ENCODE measurements at regions of chr2 and their contacts with region 1.

Region 1: GRCh38 chr2:74587664-74588277 is 33.3 kb downstream of the DOK1 start:
- DNase-seq: peak; percentile 59
- H3K4me3 Mint-ChIP-seq: no peak overlapping the region
- H3K27ac Mint-ChIP-seq: no peak overlapping the region
- H3K4me1 Mint-ChIP-seq: peaks cover 7% of the 10 kb centered on the region
- H3K27me3 Mint-ChIP-seq: peaks cover 21% of the 10 kb centered on the region
- CTCF ChIP-seq: peak; percentile 27

Region 2: DNA sequence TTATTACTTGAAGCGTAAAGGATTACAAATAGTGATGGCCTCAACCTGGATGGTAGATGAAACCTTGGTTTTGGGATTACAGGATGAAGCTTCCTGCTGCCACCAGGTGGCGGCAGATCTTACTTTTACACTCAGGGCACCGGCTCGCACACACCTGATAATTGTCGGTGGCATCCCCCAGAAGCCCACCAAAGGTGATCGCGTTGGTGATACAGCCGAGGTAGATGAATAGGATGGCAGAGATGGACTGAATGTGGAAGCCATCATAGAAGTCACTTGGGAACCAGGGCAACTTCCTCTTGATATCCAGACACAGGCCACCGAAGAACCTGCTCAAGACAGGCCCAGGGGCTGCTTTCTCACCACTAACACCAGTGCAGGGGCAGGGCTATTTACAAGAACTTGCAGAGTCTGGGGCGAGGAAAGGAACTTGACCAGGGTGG is 337.6 kb before region 1 on chr2:
- CTCF ChIA-PET with region 1: no interaction called
- intact Hi-C with region 1: loop called (anchors 10 kb)
- DNase-seq: peak; percentile 54
- H3K4me3 Mint-ChIP-seq: no peak overlapping the region
- H3K27ac Mint-ChIP-seq: no peak overlapping the region
- H3K4me1 Mint-ChIP-seq: no peaks in the 10 kb centered on the region
- H3K27me3 Mint-ChIP-seq: no peaks in the 10 kb centered on the region
- CTCF ChIP-seq: peak; percentile 87

Region 3: DNA sequence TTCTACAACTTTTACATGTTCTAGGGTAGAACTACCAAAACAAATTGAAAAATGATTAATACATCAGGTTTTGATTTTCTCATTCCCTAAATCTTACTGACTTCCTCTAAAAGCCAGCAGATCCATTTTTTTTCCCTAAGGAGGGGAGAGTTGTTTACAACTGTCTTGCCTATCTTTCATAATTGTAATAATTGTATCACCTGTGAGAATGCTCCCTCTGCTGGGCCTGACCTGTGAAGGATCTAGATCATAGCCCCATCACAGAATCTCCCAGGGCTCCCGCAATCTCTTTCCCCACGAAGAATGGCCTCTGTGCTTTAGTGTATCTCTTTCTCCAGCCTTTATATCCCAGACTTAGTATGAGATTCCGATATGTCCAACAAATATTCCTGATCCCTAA is 43.1 kb before region 1 on chr2:
- CTCF ChIA-PET with region 1: no interaction called
- intact Hi-C with region 1: loop called (anchors 2 kb)
- DNase-seq: no peak
- H3K4me3 Mint-ChIP-seq: no peak overlapping the region
- H3K27ac Mint-ChIP-seq: no peak overlapping the region
- H3K4me1 Mint-ChIP-seq: peaks cover 4% of the 10 kb centered on the region
- H3K27me3 Mint-ChIP-seq: no peaks in the 10 kb centered on the region
- CTCF ChIP-seq: peak; percentile 27

Region 4: GRCh38 chr2:74845217-74846011 is 257.6 kb after region 1 on chr2:
- CTCF ChIA-PET with region 1: no interaction called
- intact Hi-C with region 1: no loop called
- DNase-seq: peak; percentile 93
- H3K4me3 Mint-ChIP-seq: peak overlapping the region; percentile 37
- H3K27ac Mint-ChIP-seq: peak overlapping the region; percentile 79
- H3K4me1 Mint-ChIP-seq: peaks cover 92% of the 10 kb centered on the region
- H3K27me3 Mint-ChIP-seq: no peaks in the 10 kb centered on the region
- CTCF ChIP-seq: no peak